ENCODE measurements at regions of chr2 and their contacts with region 1.

Region 1: GRCh38 chr2:20970068-20970467 is 73.8 kb downstream of the APOB start:
- DNase-seq: no peak
- H3K4me3 ChIP-seq: no peak overlapping the region
- H3K27ac ChIP-seq: no peak overlapping the region
- H3K4me1 ChIP-seq: no peaks in the 10 kb centered on the region
- H3K27me3 ChIP-seq: peaks cover 22% of the 10 kb centered on the region; the same call in 1 of the 2 replicates

Region 2: GRCh38 chr2:20661067-20661980 is 308.7 kb before region 1 on chr2:
- in situ Hi-C with region 1: loop called (anchors 5 kb)
- DNase-seq: peak; percentile 88
- H3K4me3 ChIP-seq: no peak overlapping the region
- H3K27ac ChIP-seq: no peak overlapping the region
- H3K4me1 ChIP-seq: peaks cover 8% of the 10 kb centered on the region; the same call in 1 of the 2 replicates
- H3K27me3 ChIP-seq: peaks cover 68% of the 10 kb centered on the region

Region 3: GRCh38 chr2:21301871-21302455 is 331.9 kb after region 1 on chr2:
- in situ Hi-C with region 1: no loop called
- DNase-seq: no peak
- H3K4me3 ChIP-seq: no peak overlapping the region
- H3K27ac ChIP-seq: no peak overlapping the region
- H3K4me1 ChIP-seq: no peaks in the 10 kb centered on the region
- H3K27me3 ChIP-seq: no peaks in the 10 kb centered on the region

Measured in GM23248 (cell line).